ENCODE measurements at regions of chr19 and their contacts with region 1.

Region 1: DNA sequence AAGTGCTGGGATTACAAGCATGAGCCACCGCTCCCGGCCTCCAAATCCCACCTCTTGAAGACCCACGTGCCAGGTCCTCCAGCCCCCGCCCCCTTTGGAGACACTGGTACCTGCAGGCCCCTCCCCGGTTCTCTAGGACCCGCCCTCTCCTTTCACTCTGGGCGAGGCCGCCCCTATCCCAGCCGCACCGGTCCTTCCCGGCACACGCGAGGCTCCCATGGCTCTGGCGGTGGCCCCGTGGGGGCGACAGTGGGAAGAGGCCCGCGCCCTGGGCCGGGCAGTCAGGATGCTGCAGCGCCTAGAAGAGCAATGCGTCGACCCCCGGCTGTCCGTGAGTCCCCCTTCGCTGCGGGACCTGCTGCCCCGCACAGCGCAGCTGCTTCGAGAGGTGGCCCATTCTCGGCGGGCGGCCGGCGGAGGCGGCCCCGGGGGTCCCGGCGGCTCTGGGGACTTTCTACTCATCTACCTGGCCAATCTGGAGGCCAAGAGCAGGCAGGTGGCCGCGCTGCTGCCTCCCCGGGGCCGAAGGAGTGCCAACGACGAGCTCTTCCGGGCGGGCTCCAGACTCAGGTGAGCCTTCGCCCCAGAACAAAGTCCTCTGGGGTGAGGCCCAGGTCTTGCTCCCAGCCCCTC is at the start of gene CBLC:
- DNase-seq: peak; percentile 94
- H3K4me3 ChIP-seq: peak within 1 kb of the TSS; percentile 87 to 97 (median 91)
- H3K27ac ChIP-seq: peak within 1 kb of the TSS; percentile 93
- H3K4me1 ChIP-seq: peaks cover 57% of the 10 kb centered on the region
- H3K27me3 ChIP-seq: no peaks in the 10 kb centered on the region
- CTCF ChIP-seq: peak in 1 of 2 donors; percentile 39
- total RNA-seq, gene CBLC: 51.2 to 76.7 TPM

Region 2: GRCh38 chr19:44741841-44742352 is 35.9 kb before region 1 on chr19:
- CTCF ChIA-PET with region 1: no interaction called
- dilution Hi-C with region 1: no loop called
- in situ Hi-C with region 1: no loop called
- intact Hi-C with region 1: loop called (anchors 1 kb)
- DNase-seq: peak; percentile 99
- H3K4me3 ChIP-seq: no peak overlapping the region
- H3K27ac ChIP-seq: peak overlapping the region; percentile 78
- H3K4me1 ChIP-seq: peaks cover 35% of the 10 kb centered on the region
- H3K27me3 ChIP-seq: no peaks in the 10 kb centered on the region
- CTCF ChIP-seq: no peak

Region 3: GRCh38 chr19:44869733-44870470 is 92.1 kb after region 1 on chr19:
- CTCF ChIA-PET with region 1: no interaction called
- dilution Hi-C with region 1: no loop called
- in situ Hi-C with region 1: no loop called
- intact Hi-C with region 1: no loop called
- DNase-seq: no peak
- H3K4me3 ChIP-seq: no peak overlapping the region
- H3K27ac ChIP-seq: no peak overlapping the region
- H3K4me1 ChIP-seq: no peaks in the 10 kb centered on the region
- H3K27me3 ChIP-seq: no peaks in the 10 kb centered on the region
- CTCF ChIP-seq: no peak

Measured in mammary epithelial cell (primary cell).